ENCODE measurements at regions of chr1 and their contacts with region 1.

Region 1: DNA sequence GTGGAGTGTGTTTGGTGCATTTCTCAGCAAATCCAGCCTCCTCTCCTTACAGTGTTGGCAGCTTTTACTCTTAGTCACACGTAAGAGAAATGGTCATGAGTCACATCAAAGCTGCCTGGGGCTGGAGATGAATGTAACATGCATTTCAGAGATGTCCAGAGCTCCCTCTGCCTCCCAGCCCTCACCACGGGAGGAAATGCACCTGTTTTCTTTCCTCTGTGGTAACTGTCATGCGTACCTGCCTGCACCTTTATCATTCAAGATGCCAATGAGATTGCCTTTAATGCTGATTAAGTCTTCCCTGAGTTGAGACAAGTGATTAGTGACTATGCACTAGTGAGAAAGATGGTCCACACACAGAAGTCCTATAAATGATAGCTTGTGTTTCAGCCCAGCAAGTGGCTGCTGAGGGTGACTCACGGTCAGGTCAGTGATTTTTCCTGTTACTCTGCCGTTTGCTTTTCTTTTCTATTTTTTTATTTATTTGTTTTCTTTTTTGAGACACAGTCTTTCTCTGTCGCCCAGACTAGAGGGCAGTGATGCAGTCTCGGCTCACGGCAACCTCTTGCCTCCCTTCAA is 277.3 kb upstream of the FMN2 start:
- DNase-seq: peak in 1 of 35 experiments; percentile 12
- ATAC-seq: peak in 3 of 4 experiments; percentile 38 to 44 (median 43)
- H3K4me3 ChIP-seq: no peak overlapping the region
- H3K4me3 Mint-ChIP-seq: peak overlapping the region; percentile 35 to 63 (median 52)
- H3K27ac ChIP-seq: no peak overlapping the region
- H3K27ac Mint-ChIP-seq: peak overlapping the region in 1 of 2 donors; percentile 3
- H3K4me1 ChIP-seq: peaks cover 0 to 15% of the 10 kb centered on the region in 2 experiments
- H3K4me1 Mint-ChIP-seq: peaks cover 20 to 39% (median 33%) of the 10 kb centered on the region in 3 donors
- H3K27me3 ChIP-seq: no peaks in the 10 kb centered on the region
- H3K27me3 Mint-ChIP-seq: no peaks in the 10 kb centered on the region

Region 2: GRCh38 chr1:239778221-239778813 is 36.1 kb before region 1 on chr1:
- CTCF ChIA-PET with region 1: no interaction called
- POLR2A ChIA-PET with region 1: interaction called in 1 of 2 experiments, 11 read pairs
- DNase-seq: no peak
- ATAC-seq: no peak
- H3K4me3 ChIP-seq: no peak overlapping the region
- H3K4me3 Mint-ChIP-seq: no peak overlapping the region
- H3K27ac ChIP-seq: no peak overlapping the region
- H3K27ac Mint-ChIP-seq: no peak overlapping the region
- H3K4me1 ChIP-seq: no peaks in the 10 kb centered on the region
- H3K4me1 Mint-ChIP-seq: no peaks in the 10 kb centered on the region
- H3K27me3 ChIP-seq: no peaks in the 10 kb centered on the region
- H3K27me3 Mint-ChIP-seq: no peaks in the 10 kb centered on the region

Region 3: DNA sequence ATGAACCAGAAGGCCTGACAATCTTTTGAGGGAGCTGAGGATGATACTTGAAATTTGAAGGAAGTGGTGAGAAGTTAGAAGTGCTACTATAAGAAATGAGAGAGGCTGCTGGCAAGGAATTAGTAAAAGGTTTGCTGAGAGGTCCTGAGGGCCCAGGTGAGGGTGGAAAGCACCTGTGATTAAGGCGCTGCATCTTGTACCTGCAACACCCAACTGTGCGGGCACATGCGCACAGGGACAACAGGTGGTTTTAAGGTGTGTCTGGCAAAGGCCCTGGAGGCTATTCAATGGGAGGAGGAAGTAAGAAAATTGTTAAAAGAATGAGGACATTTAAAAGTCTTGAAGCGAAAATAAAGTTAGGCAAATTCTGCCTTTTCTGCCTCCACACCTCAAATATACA is 1193.3 kb after region 1 on chr1:
- CTCF ChIA-PET with region 1: interaction called in 1 of 2 experiments, 11 read pairs
- POLR2A ChIA-PET with region 1: no interaction called
- DNase-seq: no peak
- ATAC-seq: no peak
- H3K4me3 ChIP-seq: no peak overlapping the region
- H3K4me3 Mint-ChIP-seq: no peak overlapping the region
- H3K27ac ChIP-seq: no peak overlapping the region
- H3K27ac Mint-ChIP-seq: no peak overlapping the region
- H3K4me1 ChIP-seq: no peaks in the 10 kb centered on the region
- H3K4me1 Mint-ChIP-seq: no peaks in the 10 kb centered on the region
- H3K27me3 ChIP-seq: no peaks in the 10 kb centered on the region
- H3K27me3 Mint-ChIP-seq: no peaks in the 10 kb centered on the region

Measured in T-cell (primary cell).